AG04450 (cell line): ENCODE measurements at regions of chr17 and their contacts with region 1.

Region 1: DNA sequence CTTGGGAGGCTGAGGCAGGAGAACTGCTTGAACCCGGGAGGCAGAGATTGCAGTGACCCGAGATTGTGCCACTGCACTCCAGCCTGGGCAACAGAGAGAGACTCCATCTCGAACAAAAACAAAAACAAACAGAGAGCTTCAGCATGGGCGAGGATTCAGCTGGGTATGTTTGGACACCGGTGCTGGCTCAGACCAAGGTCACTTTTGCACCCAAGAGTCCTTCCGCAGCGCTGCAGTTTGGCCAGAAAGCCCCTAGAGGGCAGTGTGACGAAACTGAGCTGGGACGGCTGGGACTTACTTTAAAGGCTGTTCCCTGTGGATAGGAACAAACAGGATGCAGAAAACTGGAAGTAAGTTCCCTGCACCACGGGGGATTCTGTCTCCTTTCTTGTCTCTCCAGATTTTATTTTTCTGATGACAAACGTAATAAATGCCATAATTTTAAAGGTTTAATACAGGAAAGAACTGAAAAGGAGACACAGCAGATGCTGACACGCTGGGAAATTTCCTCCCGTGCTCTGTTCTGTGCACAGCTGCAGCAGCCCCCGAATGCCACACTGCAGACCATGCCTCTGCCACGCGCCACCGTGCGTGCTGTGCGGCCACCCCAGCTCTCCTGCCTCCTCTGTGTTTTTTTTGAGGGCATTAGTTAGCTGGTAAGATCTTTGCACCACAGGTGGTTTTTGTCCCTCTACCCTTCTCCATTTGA is 25.2 kb upstream of the USP36 start:
- DNase-seq: peak; percentile 63
- H3K4me3 ChIP-seq: no peak overlapping the region
- H3K27ac ChIP-seq: peak overlapping the region; percentile 3
- H3K27me3 ChIP-seq: no peaks in the 10 kb centered on the region
- CTCF ChIP-seq: peak; percentile 92

Region 2: GRCh38 chr17:78879635-78880186 is 13.9 kb after region 1 on chr17:
- CTCF ChIA-PET with region 1: interaction called, 25 read pairs
- POLR2A ChIA-PET with region 1: interaction called, 7 read pairs
- DNase-seq: peak; percentile 92
- H3K4me3 ChIP-seq: peak overlapping the region; percentile 38
- H3K27ac ChIP-seq: peak overlapping the region; percentile 97
- H3K27me3 ChIP-seq: no peaks in the 10 kb centered on the region
- CTCF ChIP-seq: no peak